Activated CD4-positive, alpha-beta memory T cell treated with anti-CD3 and anti-CD28 coated beads for 36 hours (primary cell): ENCODE measurements at regions of chr5 and their contacts with region 1.

Region 1: GRCh38 chr5:107673368-107674136 is 2.8 kb upstream of the EFNA5 start:
- DNase-seq: peak; percentile 86
- H3K4me3 Mint-ChIP-seq: peak overlapping the region; percentile 59
- H3K27ac Mint-ChIP-seq: no peak overlapping the region
- H3K4me1 Mint-ChIP-seq: peaks cover 29% of the 10 kb centered on the region
- H3K27me3 Mint-ChIP-seq: peaks cover 52% of the 10 kb centered on the region

Region 2: DNA sequence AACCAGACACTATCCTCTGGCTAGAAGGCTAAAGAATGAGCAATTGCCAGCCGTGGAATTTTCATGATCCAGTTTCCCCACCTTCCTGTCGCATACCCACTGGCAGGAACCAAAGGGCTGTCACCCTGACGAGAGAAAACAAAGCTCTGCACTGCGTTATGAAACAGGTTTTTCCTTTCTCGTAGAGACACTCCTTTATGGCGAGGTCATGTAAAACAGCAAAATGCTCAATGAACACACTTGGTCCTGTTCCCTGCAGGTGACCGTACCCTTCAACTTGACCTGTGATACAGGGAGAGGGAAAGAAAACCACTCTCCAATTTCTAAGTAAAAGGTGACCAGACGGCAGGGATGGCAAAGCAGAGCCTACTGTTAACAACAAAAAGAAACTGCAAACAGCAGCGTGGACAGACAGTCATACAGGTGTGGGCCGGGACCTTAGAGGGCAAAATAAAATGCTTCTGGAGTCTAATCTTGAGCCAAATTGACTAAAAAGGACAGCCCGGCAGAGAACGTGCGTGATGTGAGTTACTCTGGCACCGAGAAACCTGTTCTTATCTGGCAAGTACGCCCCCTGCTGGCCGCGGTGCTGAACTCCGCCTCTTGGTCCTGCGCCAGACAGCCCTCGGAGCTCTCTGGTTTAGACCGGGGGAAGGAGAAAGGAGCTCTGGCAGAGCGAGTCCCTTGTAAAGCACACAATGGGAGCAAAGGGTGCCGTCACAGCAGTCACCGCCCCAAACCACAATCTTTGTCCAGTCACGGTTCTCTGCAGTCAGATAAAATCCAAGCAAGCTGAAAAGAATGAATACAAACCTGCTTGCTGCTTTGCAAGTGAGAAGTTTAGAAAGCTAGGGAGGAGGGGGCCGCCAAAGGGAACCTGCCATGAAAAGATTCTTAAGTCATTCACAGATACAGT is 101.7 kb before region 1 on chr5:
- CTCF ChIA-PET with region 1: interaction called, 7 read pairs
- POLR2A ChIA-PET with region 1: no interaction called
- intact Hi-C with region 1: loop called (anchors 2 kb)
- DNase-seq: peak; percentile 91
- H3K4me3 Mint-ChIP-seq: peak overlapping the region; percentile 71
- H3K27ac Mint-ChIP-seq: no peak overlapping the region
- H3K4me1 Mint-ChIP-seq: peaks cover 16% of the 10 kb centered on the region
- H3K27me3 Mint-ChIP-seq: peaks cover 17% of the 10 kb centered on the region

Region 3: GRCh38 chr5:108345541-108346171 is 672.1 kb after region 1 on chr5:
- CTCF ChIA-PET with region 1: no interaction called
- POLR2A ChIA-PET with region 1: no interaction called
- intact Hi-C with region 1: loop called (anchors 5 kb)
- DNase-seq: no peak
- H3K4me3 Mint-ChIP-seq: no peak overlapping the region
- H3K27ac Mint-ChIP-seq: no peak overlapping the region
- H3K4me1 Mint-ChIP-seq: no peaks in the 10 kb centered on the region
- H3K27me3 Mint-ChIP-seq: no peaks in the 10 kb centered on the region